ENCODE measurements at regions of chr1 and their contacts with region 1.

Region 1: GRCh38 chr1:35930593-35931445 is at the start of gene AGO3:
- DNase-seq: peak; percentile 96
- ATAC-seq: peak; percentile 93
- H3K4me3 Mint-ChIP-seq: peak within 1 kb of the TSS; percentile 97
- H3K27ac Mint-ChIP-seq: peak within 1 kb of the TSS; percentile 98
- H3K4me1 Mint-ChIP-seq: peaks cover 34% of the 10 kb centered on the region
- H3K27me3 Mint-ChIP-seq: no peaks in the 10 kb centered on the region
- CTCF ChIP-seq: no peak
- total RNA-seq, gene AGO3: 27.7 to 30.0 TPM

Region 2: GRCh38 chr1:35882945-35883634 is 47.7 kb before region 1 on chr1 and contains the start of gene AGO1:
- CTCF ChIA-PET with region 1: interaction called, 10 read pairs
- POLR2A ChIA-PET with region 1: interaction called, 12 read pairs
- intact Hi-C with region 1: no loop called
- DNase-seq: peak; percentile 96
- ATAC-seq: peak; percentile 99
- H3K4me3 Mint-ChIP-seq: peak within 1 kb of the TSS; percentile 91
- H3K27ac Mint-ChIP-seq: peak within 1 kb of the TSS; percentile 85
- H3K4me1 Mint-ChIP-seq: peaks cover 43% of the 10 kb centered on the region
- H3K27me3 Mint-ChIP-seq: no peaks in the 10 kb centered on the region
- CTCF ChIP-seq: peak; percentile 87
- total RNA-seq, gene AGO1: 33.0 to 34.2 TPM

Region 3: GRCh38 chr1:36088575-36089443 is 158.0 kb after region 1 on chr1 and contains the start of gene ADPRS:
- CTCF ChIA-PET with region 1: no interaction called
- POLR2A ChIA-PET with region 1: interaction called, 8 read pairs
- intact Hi-C with region 1: loop called (anchors 5 kb)
- DNase-seq: peak; percentile 92
- ATAC-seq: peak; percentile 88
- H3K4me3 Mint-ChIP-seq: peak within 1 kb of the TSS; percentile 90
- H3K27ac Mint-ChIP-seq: peak within 1 kb of the TSS; percentile 89
- H3K4me1 Mint-ChIP-seq: peaks cover 10% of the 10 kb centered on the region
- H3K27me3 Mint-ChIP-seq: peaks cover 14% of the 10 kb centered on the region
- CTCF ChIP-seq: peak; percentile 99
- total RNA-seq, gene ADPRS: 52.7 to 54.9 TPM